Thyroid gland (tissue), 4 donors: ENCODE measurements at regions of chr9 and their contacts with region 1.

Region 1: GRCh38 chr9:109119439-109120203 is at the start of gene TMEM245:
- DNase-seq: peak; percentile 98
- H3K4me3 ChIP-seq: peak within 1 kb of the TSS; percentile 67 to 83 (median 78)
- H3K27ac ChIP-seq: peak within 1 kb of the TSS; percentile 96 to 98 (median 97)
- H3K4me1 ChIP-seq: peaks cover 23 to 29% of the 10 kb centered on the region in 2 donors
- H3K27me3 ChIP-seq: no peaks in the 10 kb centered on the region
- CTCF ChIP-seq: peak in 1 of 6 experiments; percentile 12
- POLR2A ChIP-seq: peak; percentile 90 to 99
- total RNA-seq, gene TMEM245: 222 to 549 (median 318) TPM

Region 2: GRCh38 chr9:109068764-109069163 is 50.9 kb before region 1 on chr9:
- intact Hi-C with region 1: loop called (anchors 2 kb)
- DNase-seq: no peak
- H3K4me3 ChIP-seq: no peak overlapping the region
- H3K27ac ChIP-seq: no peak overlapping the region
- H3K4me1 ChIP-seq: peaks cover 5 to 7% of the 10 kb centered on the region in 2 donors
- H3K27me3 ChIP-seq: no peaks in the 10 kb centered on the region
- CTCF ChIP-seq: no peak
- POLR2A ChIP-seq: no peak